ENCODE measurements at regions of chr14 and their contacts with region 1.

Region 1: DNA sequence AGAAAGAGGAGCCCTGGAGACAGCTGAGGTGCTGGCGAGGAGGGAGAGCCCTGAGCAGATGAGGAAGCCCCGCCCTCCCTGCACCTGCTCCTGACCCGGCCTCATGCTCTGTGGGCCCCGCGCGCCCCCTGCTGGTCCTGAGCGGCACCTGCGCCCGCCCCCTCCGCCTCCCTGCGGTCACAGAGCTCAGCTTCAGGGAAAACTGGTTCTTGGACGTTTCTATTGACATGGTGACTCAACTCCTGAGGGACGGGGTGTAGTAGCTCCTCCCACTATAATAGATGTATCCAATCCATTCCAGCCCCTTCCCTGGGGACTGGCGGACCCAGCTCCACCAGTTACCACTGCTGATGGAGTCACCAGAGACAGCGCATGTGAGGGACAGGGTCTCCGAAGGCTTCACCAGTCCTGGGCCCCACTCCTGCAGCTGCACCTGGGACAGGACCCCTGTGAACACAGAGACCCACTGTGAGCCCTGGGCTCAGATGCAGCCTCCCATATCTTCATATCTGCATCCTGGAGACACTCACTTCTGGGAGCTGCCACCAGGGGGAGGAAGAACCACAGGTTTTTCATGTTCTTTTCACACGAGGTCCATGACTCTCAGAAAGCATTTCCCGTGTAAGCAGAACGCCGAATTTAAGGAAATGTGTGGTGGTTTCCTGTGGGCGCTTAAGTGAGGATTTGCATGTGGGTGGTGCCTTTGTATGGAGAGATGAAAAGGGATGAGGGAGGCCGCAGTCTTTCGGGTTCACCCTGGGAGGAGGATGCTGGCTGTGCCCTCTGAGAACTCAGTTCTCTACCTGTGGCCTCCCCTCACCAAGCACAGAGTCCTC is 1346.4 kb downstream of the TMEM121 start:
- H3K4me3 ChIP-seq: no peak overlapping the region
- H3K27ac ChIP-seq: no peak overlapping the region
- H3K4me1 ChIP-seq: 0 out of 2 replicates have a peak, but pooled peaks cover 4% of the 10 kb centered on the region
- CTCF ChIP-seq: peak; percentile 86

Region 2: DNA sequence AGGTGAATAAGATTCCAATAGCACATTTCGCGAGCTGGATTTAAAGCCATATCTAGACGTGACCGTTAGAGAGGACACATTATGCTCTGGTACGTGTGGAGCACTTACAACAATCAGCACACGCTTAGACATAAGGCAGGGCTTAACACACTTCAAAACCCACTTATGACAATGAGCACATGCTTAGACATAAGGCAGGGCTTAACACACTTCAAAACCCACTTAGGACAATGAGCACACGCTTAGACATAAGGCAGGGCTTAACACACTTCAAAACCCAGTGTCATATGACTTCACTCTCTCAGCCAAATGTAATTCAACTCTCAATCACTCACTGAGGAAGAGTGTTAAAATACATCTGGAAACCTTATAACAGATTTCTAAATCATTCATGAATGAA is 1959.4 kb before region 1 on chr14:
- CTCF ChIA-PET with region 1: no interaction called
- POLR2A ChIA-PET with region 1: no interaction called
- H3K4me3 ChIP-seq: no peak overlapping the region
- H3K27ac ChIP-seq: no peak overlapping the region
- H3K4me1 ChIP-seq: no peaks in the 10 kb centered on the region
- CTCF ChIP-seq: no peak

Region 3: DNA sequence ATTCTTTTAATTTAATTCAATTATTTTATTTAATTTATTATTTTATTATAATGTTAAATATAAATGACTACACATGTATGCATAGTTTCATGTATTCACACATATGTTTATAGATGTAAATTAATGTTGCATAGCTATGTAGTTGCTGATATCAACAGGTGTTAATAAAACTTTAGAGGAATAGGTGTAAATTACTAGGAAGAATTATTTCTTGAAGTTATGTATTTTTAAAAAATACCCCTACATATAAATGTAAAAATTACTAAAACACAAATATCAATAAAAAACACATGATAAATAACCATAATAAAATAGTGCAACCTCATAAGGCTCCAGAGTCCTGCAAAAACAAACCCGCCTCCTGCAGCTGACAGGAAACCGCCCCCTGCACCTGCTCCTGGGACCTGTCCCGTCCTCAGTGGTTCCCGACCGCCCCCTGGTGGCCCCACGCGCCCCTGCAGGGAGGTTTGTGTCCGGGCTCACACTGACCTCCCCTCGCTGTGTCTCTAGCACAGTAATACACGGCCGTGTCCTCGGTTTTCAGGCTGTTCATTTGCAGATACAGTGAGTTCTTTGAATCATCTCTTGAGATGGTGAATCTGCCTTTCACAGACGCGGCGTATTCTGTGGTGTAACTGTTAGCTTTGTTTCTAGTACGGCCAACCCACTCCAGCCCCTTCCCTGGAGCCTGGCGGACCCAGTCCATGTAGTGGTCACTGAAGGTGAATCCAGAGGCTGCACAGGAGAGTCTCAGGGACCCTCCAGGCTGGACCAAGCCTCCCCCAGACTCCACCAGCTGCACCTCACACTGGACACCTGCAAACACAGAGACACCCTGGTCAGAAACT is 82.4 kb before region 1 on chr14:
- CTCF ChIA-PET with region 1: interaction called, 49 read pairs
- POLR2A ChIA-PET with region 1: no interaction called
- H3K4me3 ChIP-seq: no peak overlapping the region
- H3K27ac ChIP-seq: no peak overlapping the region
- H3K4me1 ChIP-seq: no peaks in the 10 kb centered on the region
- CTCF ChIP-seq: peak; percentile 79

Region 4: DNA sequence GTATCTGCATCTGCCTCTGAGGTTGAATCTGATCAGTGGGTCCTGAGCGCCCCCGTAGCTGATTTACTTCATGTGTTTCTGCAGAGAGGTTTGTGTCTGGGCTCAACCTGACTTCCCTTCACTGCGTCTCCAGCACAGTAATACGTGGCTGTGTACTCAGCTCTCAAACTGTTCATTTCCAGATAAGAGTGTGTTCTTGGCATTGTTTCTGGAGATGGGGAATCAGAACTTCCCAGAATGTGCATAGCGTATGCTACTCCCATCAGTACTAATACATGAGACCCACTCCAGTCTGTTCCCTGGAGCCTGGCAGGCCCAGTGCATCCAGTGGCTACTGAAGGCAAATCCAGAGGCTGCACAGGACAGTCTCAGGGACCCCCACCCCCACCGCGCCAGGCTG is 49.3 kb before region 1 on chr14:
- CTCF ChIA-PET with region 1: interaction called, 74 read pairs
- POLR2A ChIA-PET with region 1: no interaction called
- H3K4me3 ChIP-seq: no peak overlapping the region
- H3K27ac ChIP-seq: no peak overlapping the region
- H3K4me1 ChIP-seq: no peaks in the 10 kb centered on the region
- CTCF ChIP-seq: no peak

Region 5: DNA sequence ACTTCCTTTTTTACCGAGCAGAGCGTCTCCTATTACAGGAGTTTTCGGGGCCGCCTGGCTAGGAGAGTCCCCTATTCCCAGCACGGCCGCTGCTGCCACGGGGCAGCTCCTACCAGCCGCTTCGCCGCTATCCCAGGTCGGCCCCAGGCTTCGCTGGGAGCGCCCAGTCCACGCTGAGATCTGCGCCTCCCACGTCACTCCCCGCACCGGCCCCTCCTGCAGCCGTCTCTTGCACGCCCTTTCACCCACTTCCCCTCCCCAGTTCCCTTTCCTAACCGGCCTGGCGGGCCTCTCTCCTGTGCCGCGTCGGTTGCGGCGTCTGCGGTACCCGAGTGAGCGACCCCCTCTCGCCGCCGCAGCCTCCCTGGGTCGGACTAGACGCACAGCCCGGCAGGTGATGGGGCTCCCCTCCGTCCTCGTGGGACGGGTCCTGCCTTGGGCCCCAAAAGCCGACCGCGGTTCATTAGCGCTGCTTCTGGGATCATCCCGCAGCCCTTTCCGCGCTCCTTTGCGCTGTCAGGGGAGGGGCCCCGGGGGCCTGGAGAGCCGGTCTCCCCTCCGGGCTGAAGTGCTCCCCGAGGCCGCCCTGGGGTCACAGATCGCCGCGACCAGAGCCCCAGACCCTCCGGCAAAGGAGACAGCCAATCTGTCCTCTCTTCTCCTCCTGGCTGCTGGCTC is 28.1 kb before region 1 on chr14:
- CTCF ChIA-PET with region 1: interaction called, 261 read pairs
- POLR2A ChIA-PET with region 1: no interaction called
- H3K4me3 ChIP-seq: peak overlapping the region; percentile 28
- H3K27ac ChIP-seq: peak overlapping the region; percentile 58; the same call in 1 of the 2 replicates
- H3K4me1 ChIP-seq: peaks cover 24% of the 10 kb centered on the region
- CTCF ChIP-seq: no peak